Posterior cingulate gyrus (tissue), 11 donors: ENCODE measurements at regions of chr3 and their contacts with region 1.

Region 1: DNA sequence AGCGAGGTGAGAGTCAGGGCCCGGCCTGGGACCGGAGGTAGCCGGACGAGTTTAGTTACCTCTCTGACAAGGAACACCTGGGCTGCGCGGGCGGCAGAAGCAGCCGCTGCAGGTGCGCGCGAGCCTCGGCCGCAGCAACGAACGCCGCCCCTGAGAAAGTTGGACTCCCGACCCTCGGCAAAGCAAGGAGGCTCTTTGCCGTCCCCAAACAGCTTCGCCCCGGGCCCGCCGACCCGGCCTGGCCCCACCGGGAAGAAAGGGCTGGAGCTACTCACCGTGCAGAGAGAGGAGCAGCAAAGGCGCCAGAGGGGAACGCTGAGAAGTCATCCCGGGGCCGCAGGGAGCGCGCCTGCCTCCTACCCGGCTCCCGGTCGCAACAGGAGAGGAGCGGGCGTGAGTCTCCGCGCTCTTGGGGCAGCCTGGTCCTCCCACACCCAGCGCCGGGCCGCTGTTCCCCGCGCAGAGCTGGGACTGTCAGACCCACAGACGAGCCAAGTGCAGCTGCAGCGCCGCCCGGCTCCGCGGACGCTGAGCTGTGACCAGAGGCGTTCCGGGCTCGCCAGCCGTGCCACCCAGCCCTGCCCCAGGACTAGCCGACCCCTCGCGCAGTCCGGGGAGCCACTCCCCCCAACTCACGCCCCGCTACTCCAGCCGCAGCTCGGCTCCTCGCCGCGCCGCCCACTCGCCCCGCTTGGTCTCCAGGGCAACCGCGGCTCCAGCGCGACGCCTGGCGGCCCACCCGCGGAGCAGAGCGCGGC is at the start of gene IGSF11:
- DNase-seq: peak; percentile 80 to 98 (median 88)

Region 2: GRCh38 chr3:118607915-118608820 is 426.3 kb before region 1 on chr3:
- intact Hi-C with region 1: no loop called
- DNase-seq: no peak

Region 3: DNA sequence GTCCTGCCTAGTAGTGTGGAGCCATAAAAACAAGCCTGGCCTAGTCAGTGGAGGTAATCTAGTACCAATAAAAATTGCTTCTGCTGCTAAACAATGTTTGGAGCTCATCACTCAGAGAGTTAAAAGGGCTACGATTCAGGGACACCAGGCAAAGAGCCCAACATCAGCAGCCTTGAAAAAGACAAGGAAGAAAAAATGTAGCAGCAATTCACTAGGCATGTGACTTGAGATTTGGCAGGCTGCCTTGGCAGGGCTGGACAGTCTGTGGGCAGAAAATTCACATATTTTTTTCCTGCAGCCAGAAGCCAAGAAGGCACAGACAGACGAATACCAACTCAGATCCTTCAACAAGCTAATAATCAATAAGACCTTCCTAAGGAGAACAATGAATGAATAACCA is 47.0 kb before region 1 on chr3:
- intact Hi-C with region 1: loop called (anchors 2 kb)
- DNase-seq: peak; percentile 68 to 95 (median 86)

Region 4: DNA sequence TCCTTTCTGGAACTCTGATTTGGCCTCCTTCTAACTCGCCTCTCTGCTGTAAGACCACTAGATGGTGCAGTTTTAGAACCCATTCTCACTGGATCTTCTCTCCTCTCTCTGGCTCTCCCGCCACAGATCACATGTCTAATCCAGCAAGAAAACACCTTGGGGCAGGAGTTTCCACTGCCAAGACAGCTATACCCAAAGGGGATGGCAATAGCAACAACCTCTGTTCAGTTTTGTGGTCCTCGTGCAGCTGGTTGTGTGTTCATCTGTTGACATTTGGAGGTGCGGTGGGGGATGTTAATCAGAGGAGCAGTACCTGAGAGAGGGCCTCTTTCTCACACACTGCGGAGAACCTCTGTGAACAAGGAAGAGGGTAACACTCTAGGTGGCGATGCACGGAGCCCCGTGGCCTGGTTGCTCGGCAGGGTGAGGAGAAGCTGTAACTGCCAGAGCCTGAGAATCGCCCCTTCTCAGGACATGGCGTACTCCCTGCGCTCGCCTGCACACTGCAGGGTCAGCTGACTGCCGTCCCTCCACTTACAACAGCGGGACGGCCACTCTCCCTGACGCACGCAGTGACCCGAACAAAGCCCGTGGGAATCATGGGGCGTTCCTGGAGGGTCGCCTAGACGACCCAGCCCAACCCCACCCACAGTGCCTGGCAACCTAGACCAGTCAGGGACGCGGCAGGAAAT is 111.2 kb after region 1 on chr3 and contains the start of gene TEX55:
- intact Hi-C with region 1: no loop called
- DNase-seq: no peak

Region 5: DNA sequence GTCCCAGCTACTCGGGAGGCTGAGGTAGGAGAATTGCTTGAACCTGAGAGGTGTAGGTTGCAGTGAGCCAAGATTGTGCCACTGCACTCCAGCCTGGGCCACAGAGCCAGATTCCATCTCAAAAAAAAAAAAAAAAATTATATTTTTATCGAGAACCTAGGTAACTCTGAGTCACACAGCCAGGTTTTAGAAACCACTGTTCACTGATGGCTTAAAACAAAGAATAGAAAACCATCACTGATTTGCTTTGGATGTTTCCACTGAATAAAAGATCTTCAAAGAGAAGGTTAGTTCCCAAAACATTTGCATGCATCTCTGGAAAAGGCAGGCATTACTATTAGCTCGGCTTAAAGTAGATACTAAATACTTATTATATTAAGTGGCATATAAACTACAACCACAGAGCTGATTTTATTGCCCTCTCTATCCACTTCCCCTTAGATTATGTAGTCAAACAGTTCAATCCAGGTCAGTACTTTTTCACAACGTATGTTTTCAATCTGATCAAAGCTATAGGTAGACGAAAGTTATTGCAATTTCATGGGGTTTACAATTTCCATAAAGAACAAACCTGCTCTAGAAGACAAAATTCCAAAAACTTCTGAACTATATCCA is 204.9 kb after region 1 on chr3:
- intact Hi-C with region 1: no loop called
- DNase-seq: no peak